ENCODE measurements at regions of chr17 and their contacts with region 1.

Region 1: GRCh38 chr17:48131216-48131824 is 23.8 kb downstream of the SNX11 start:
- DNase-seq: no peak
- ATAC-seq: peak; percentile 80 to 92 (median 89)
- H3K4me3 ChIP-seq: no peak overlapping the region
- H3K27ac ChIP-seq: no peak overlapping the region
- H3K4me1 ChIP-seq: no peaks in the 10 kb centered on the region
- H3K27me3 ChIP-seq: no peaks in the 10 kb centered on the region
- CTCF ChIP-seq: peak; percentile 75 to 87 (median 84)
- POLR2A ChIP-seq: no peak

Region 2: GRCh38 chr17:47840740-47841603 is 290.3 kb before region 1 on chr17 and contains the start of gene SCRN2:
- intact Hi-C with region 1: no loop called
- DNase-seq: peak; percentile 91 to 94 (median 93)
- ATAC-seq: peak; percentile 93 to 97 (median 95)
- H3K4me3 ChIP-seq: peak within 1 kb of the TSS; percentile 86 to 94 (median 92)
- H3K27ac ChIP-seq: peak within 1 kb of the TSS; percentile 52 to 92 (median 75)
- H3K4me1 ChIP-seq: peaks cover 0 to 31% (median 11%) of the 10 kb centered on the region in 4 donors
- H3K27me3 ChIP-seq: no peaks in the 10 kb centered on the region
- CTCF ChIP-seq: peak; percentile 92 to 97 (median 94)
- POLR2A ChIP-seq: no peak
- total RNA-seq, gene SCRN2: 18.1 to 25.7 (median 19.6) TPM

Region 3: DNA sequence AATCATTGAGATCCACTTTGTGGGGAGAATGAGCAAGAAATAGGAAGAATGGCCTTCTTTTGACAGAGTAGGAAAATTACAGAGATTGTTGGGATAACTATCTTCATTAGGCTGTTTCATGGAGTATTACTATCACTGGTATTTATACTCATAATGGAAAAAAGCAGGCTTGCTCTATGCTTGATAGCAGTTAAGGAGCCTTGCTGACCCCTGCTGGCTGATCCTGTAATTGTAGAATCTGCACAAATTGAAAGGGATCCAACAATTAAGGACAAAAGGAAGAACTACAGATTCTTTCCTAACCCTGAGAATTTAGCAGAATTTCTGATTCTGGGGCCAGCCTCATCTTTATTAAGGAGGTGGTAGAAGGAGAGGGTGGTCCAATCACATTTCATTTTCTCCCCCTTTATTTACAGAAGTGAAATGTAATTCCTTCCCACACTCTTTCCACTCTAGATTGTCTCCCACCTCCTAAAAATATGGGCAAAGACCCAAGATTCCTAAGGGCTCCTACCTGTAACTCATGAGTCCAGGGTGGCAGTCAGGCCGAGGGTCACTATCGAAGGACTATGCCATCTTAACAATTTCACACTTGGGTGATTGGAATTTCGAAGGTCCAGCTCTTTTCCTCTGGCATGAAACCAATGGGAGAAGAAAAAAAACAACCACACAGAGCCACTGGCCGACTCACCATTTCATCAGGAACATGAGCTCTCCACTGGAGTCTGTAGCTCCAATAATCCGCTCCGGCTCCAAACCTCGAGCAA is 56.8 kb before region 1 on chr17:
- intact Hi-C with region 1: no loop called
- DNase-seq: peak in 2 of 3 donors; percentile 57 to 79
- ATAC-seq: peak; percentile 84 to 90 (median 88)
- H3K4me3 ChIP-seq: no peak overlapping the region
- H3K27ac ChIP-seq: no peak overlapping the region
- H3K4me1 ChIP-seq: peaks cover 0 to 11% (median 4%) of the 10 kb centered on the region in 4 donors
- H3K27me3 ChIP-seq: no peaks in the 10 kb centered on the region
- CTCF ChIP-seq: peak; percentile 74 to 96 (median 85)
- POLR2A ChIP-seq: no peak

Region 4: DNA sequence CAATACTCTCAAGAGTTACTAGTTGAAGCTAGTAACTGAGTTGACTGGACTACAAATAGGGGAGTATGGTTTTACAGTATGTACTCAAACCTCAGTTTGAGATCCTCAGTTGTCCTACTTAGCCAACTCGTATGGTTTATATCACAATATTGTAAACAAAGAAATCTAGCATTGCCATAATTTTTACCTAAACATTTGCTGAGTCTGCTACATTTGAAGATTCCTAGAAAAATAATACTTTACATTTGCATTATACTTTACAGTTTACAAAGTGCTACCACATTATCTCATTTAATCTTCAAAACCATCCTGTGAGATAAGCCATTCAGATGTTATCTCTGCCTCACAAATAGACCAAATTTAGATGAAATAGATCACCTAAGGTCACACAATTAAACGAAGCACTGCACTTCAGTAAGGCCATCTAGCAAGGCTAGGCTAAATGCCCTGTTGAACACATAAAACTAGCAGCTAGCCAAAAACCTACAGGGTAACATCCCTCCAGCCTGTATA is 46.3 kb before region 1 on chr17:
- intact Hi-C with region 1: loop called in 1 of 2 experiments (anchors 5 kb)
- DNase-seq: no peak
- ATAC-seq: no peak
- H3K4me3 ChIP-seq: no peak overlapping the region
- H3K27ac ChIP-seq: no peak overlapping the region
- H3K4me1 ChIP-seq: peaks cover 0 to 12% (median 0%) of the 10 kb centered on the region in 4 donors
- H3K27me3 ChIP-seq: no peaks in the 10 kb centered on the region
- CTCF ChIP-seq: no peak
- POLR2A ChIP-seq: no peak

Region 5: GRCh38 chr17:48194097-48194550 is 62.8 kb after region 1 on chr17:
- intact Hi-C with region 1: no loop called
- DNase-seq: no peak
- ATAC-seq: no peak
- H3K4me3 ChIP-seq: no peak overlapping the region
- H3K27ac ChIP-seq: no peak overlapping the region
- H3K4me1 ChIP-seq: peaks cover 0 to 6% (median 0%) of the 10 kb centered on the region in 4 donors
- H3K27me3 ChIP-seq: no peaks in the 10 kb centered on the region
- CTCF ChIP-seq: no peak
- POLR2A ChIP-seq: no peak

Region 6: DNA sequence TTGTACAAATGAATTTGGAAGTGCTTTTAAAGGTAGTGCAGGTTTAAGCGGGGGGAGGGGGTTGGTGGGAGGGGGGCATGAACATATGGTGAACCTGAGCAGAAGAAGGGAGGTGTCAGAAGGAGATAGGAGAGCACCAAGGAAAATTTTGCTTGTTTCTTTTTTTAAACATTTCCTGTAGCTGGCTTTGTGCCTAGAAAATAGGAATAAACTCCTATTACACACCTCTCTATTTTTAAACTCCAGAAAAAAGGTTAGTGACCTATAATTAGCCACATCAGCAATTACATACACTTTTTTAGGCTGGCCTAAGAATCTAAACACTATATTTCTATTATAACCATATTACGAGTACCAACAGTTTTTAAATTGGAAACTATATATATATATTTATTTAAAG is 139.6 kb after region 1 on chr17:
- intact Hi-C with region 1: no loop called
- DNase-seq: no peak
- ATAC-seq: no peak
- H3K4me3 ChIP-seq: no peak overlapping the region
- H3K27ac ChIP-seq: no peak overlapping the region
- H3K4me1 ChIP-seq: no peaks in the 10 kb centered on the region
- H3K27me3 ChIP-seq: peaks cover 0 to 8% of the 10 kb centered on the region in 2 donors
- CTCF ChIP-seq: no peak
- POLR2A ChIP-seq: no peak